Naive thymus-derived CD4-positive, alpha-beta T cell (primary cell): ENCODE measurements at regions of chr19 and their contacts with region 1.

Region 1: GRCh38 chr19:1355568-1356507 is 27.9 kb upstream of the NDUFS7 start:
- DNase-seq: no peak
- ATAC-seq: no peak
- H3K4me3 ChIP-seq: peak overlapping the region; percentile 60
- H3K4me3 Mint-ChIP-seq: peak overlapping the region; percentile 74 to 98 (median 90)
- H3K27ac ChIP-seq: peak overlapping the region; percentile 59
- H3K27ac Mint-ChIP-seq: peak overlapping the region in 8 of 9 donors; percentile 50 to 86 (median 78)
- H3K4me1 ChIP-seq: peaks cover 5 to 6% of the 10 kb centered on the region in 2 donors
- H3K4me1 Mint-ChIP-seq: peaks cover 9 to 24% (median 18%) of the 10 kb centered on the region in 7 donors
- H3K27me3 ChIP-seq: no peaks in the 10 kb centered on the region
- H3K27me3 Mint-ChIP-seq: no peaks in the 10 kb centered on the region

Region 2: GRCh38 chr19:1438035-1438932 is 82.4 kb after region 1 on chr19 and contains the start of gene RPS15:
- CTCF ChIA-PET with region 1: no interaction called
- POLR2A ChIA-PET with region 1: no interaction called
- intact Hi-C with region 1: loop called in 1 of 2 experiments (anchors 1 kb)
- DNase-seq: peak; percentile 92 to 98 (median 96)
- ATAC-seq: peak; percentile 97
- H3K4me3 ChIP-seq: peak within 1 kb of the TSS; percentile 82
- H3K4me3 Mint-ChIP-seq: peak within 1 kb of the TSS; percentile 87 to 99 (median 98)
- H3K27ac ChIP-seq: peak within 1 kb of the TSS; percentile 92
- H3K27ac Mint-ChIP-seq: peak within 1 kb of the TSS; percentile 96 to 100 (median 99)
- H3K4me1 ChIP-seq: peaks cover 8 to 11% of the 10 kb centered on the region in 2 donors
- H3K4me1 Mint-ChIP-seq: peaks cover 9 to 34% (median 15%) of the 10 kb centered on the region in 7 donors
- H3K27me3 ChIP-seq: no peaks in the 10 kb centered on the region
- H3K27me3 Mint-ChIP-seq: no peaks in the 10 kb centered on the region
- total RNA-seq, gene RPS15: 1,300 to 2,097 (median 2,012) TPM

Region 3: GRCh38 chr19:1568320-1569019 is 212.6 kb after region 1 on chr19 and contains the start of gene MEX3D:
- CTCF ChIA-PET with region 1: no interaction called
- POLR2A ChIA-PET with region 1: interaction called, 12 read pairs
- intact Hi-C with region 1: no loop called
- DNase-seq: peak; percentile 64 to 86 (median 81)
- ATAC-seq: peak; percentile 98
- H3K4me3 ChIP-seq: no peak within 1 kb of the TSS
- H3K4me3 Mint-ChIP-seq: peak within 1 kb of the TSS in 8 of 10 donors; percentile 3 to 78 (median 50)
- H3K27ac ChIP-seq: no peak within 1 kb of the TSS
- H3K27ac Mint-ChIP-seq: peak within 1 kb of the TSS in 1 of 9 donors; percentile 52
- H3K4me1 ChIP-seq: peaks cover 5 to 6% of the 10 kb centered on the region in 2 donors
- H3K4me1 Mint-ChIP-seq: peaks cover 0 to 8% (median 3%) of the 10 kb centered on the region in 7 donors
- H3K27me3 ChIP-seq: no peaks in the 10 kb centered on the region
- H3K27me3 Mint-ChIP-seq: peaks cover 0 to 32% (median 6%) of the 10 kb centered on the region in 5 donors
- total RNA-seq, gene MEX3D: 2.1 to 8.3 (median 2.3) TPM